HepG2 (cell line): ENCODE measurements at regions of chr20 and their contacts with region 1.

Region 1: DNA sequence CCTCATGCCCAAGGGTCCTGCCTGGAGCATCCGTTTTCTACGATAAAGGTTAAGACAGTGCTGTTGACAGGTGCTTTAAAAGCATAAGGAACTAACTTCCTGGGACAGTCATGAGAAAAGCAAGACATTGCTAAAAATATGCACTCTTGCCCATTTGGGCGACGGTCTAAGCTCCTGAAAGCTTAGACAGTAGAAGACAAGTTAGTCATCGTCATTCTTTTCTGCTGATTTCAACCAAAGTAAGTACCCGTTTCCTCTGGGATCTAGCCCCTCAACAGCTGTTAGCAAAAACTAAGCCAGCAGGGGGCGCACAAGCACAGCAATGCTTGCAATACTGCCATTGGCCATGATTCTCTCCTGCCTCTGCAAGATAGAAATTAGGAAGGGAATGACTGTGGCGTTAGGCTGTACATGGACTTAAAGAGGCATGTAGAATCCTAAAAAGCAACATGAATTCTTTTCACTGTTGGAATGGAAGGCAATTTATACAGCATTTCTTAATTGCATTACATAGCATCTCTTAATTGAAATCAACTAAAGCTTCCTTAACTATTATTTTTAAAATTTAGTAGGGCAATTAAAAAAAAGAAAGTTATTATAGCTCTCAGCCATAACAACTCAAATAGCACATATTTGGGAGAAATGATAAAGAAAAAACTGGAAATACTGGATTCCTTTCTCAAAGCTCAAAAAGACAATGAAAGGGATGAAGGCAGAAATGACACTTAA is 147.8 kb upstream of the RALGAPA2 start:
- DNase-seq: peak; percentile 87
- ATAC-seq: peak; percentile 93
- H3K4me3 ChIP-seq: no peak overlapping the region
- H3K27ac ChIP-seq: no peak overlapping the region
- H3K4me1 ChIP-seq: peaks cover 6% of the 10 kb centered on the region; the same call in 1 of the 2 replicates
- H3K27me3 ChIP-seq: no peaks in the 10 kb centered on the region
- CTCF ChIP-seq: peak; percentile 98
- EP300 ChIP-seq: no peak
- POLR2A ChIP-seq: no peak
- RAD21 ChIP-seq: peak; percentile 91

Region 2: DNA sequence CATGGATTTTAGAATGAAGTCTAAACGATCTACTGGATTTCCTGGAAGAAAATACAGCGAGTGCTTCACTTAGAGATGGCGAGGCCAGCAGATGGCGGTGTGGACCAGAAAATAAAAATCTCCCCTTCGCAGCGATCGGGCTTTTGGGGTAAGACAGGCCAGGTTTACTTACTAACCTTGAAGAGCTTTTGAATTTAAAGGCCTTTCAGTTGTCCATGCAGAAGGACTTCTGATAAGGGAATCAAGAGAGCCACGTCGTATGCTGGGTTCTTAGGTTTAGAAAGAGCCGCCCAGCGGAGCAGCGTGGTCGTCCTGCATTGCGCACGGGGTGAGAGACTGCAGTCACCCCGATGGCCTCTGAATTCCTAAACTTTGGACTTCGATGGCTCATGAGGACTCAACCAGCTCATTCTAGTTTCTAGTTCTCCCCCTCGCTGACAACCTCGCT is 22.6 kb before region 1 on chr20:
- CTCF ChIA-PET with region 1: interaction called, 9 read pairs
- POLR2A ChIA-PET with region 1: no interaction called
- in situ Hi-C with region 1: no loop called
- intact Hi-C with region 1: loop called (anchors 1 kb)
- DNase-seq: peak; percentile 60
- ATAC-seq: peak; percentile 89
- H3K4me3 ChIP-seq: peak overlapping the region in 2 of 3 experiments; percentile 18 to 57; a peak in 3 of 6 replicates
- H3K27ac ChIP-seq: no peak overlapping the region
- H3K4me1 ChIP-seq: peaks cover 7% of the 10 kb centered on the region
- H3K27me3 ChIP-seq: peaks cover 5 to 17% of the 10 kb centered on the region in 2 experiments; a peak in 4 of 5 replicates
- CTCF ChIP-seq: peak; percentile 91
- EP300 ChIP-seq: no peak
- POLR2A ChIP-seq: no peak
- RAD21 ChIP-seq: peak; percentile 83

Region 3: DNA sequence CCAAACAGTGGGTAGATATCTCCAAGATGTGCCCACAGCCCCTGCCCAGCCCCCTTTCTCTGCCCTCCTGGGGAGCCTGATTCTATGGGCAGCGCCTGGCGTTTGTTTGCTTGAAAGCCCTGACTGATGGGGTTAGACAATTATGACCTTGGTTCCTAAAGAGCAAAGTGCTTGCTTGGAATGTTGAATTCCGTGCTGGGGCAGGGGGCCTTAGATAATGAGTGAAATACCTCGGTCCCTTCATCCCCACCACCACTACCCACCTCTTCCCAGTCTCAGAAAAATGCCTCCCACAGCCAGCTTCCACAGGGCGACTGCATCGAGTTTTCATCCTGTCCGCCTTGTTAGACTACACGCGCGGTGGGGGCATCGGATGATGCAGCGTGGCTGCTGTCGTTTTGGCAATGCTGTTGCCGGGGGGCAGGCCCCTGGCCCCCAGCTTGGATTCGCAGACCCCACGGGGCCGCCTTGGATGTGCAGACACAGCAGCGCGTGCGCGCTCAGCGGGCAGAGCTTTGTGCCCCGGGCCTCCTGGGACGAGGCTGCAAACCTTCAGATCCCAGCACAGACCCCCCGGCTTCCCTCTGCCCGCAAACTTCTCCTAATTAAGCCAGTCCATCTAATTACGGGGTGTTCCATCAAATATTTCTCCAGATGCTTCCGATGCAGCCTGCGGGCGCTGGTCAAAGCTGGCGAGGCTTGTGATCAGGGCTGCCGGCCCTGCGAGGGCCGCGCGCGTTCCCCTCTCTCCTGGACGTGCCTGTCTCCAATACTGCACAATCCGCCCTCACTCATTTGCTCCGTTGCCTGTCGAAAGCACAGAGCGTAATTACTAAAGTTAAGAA is 159.8 kb after region 1 on chr20:
- CTCF ChIA-PET with region 1: no interaction called
- POLR2A ChIA-PET with region 1: no interaction called
- in situ Hi-C with region 1: loop called (anchors 10 kb)
- intact Hi-C with region 1: loop called (anchors 5 kb)
- DNase-seq: peak; percentile 82
- ATAC-seq: peak; percentile 63
- H3K4me3 ChIP-seq: peak overlapping the region; percentile 13 to 51 (median 31); a peak in 5 of 6 replicates
- H3K27ac ChIP-seq: peak overlapping the region; percentile 50
- H3K4me1 ChIP-seq: peaks cover 72% of the 10 kb centered on the region
- H3K27me3 ChIP-seq: no peaks in the 10 kb centered on the region
- CTCF ChIP-seq: no peak
- EP300 ChIP-seq: peak in 1 of 2 experiments; percentile 78; a peak in 2 of 4 replicates
- POLR2A ChIP-seq: no peak
- RAD21 ChIP-seq: no peak

Region 4: DNA sequence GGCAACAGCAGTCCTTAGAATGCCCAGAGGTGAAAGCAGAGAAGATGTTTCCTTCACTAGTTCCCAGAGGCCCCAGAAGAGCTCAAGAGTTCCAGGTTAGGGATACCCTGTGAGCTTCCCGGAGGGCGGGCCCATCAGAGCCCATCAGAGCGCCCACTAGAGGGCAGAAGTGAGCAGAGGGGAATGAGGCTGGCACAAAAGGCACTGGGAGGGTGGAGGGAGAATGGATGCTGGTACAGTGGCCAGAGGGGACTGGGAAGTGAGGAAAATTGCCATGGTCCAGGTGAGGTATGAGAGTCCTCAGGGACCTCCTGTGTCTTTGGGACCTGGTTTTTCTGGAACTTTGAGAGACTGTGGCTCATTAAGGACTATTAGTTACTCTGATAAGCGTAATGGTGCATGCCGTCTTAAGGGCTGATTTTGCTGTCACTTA is 188.6 kb after region 1 on chr20:
- CTCF ChIA-PET with region 1: no interaction called
- POLR2A ChIA-PET with region 1: no interaction called
- in situ Hi-C with region 1: no loop called
- intact Hi-C with region 1: loop called (anchors 2 kb)
- DNase-seq: peak; percentile 55
- ATAC-seq: peak; percentile 77
- H3K4me3 ChIP-seq: no peak overlapping the region
- H3K27ac ChIP-seq: no peak overlapping the region
- H3K4me1 ChIP-seq: peaks cover 58% of the 10 kb centered on the region
- H3K27me3 ChIP-seq: no peaks in the 10 kb centered on the region
- CTCF ChIP-seq: peak; percentile 79
- EP300 ChIP-seq: no peak
- POLR2A ChIP-seq: no peak
- RAD21 ChIP-seq: peak; percentile 75

Region 5: DNA sequence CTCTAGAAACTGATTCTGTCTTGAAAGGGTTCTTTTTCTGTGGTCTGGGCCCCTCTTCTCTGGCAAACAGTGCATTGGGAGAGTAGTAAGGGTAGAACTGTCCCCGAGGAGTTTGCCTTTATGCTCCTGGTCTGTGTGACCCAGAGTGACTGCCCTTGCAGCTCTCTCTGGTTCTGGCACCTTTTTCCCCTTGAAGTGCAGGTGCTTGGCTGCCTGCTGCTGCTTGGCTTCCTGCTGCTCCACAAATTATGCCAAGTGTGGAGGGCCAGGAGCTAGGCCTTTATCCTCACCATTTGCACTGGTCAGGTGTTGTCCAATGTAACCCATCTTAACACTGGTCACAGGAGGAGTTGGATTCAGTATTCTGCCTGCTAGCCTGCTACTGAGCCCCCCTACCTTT is 276.8 kb after region 1 on chr20:
- CTCF ChIA-PET with region 1: interaction called, 3 read pairs
- POLR2A ChIA-PET with region 1: no interaction called
- in situ Hi-C with region 1: no loop called
- intact Hi-C with region 1: loop called (anchors 1 kb)
- DNase-seq: no peak
- ATAC-seq: no peak
- H3K4me3 ChIP-seq: no peak overlapping the region
- H3K27ac ChIP-seq: peak overlapping the region; percentile 8
- H3K4me1 ChIP-seq: peaks cover 74% of the 10 kb centered on the region
- H3K27me3 ChIP-seq: no peaks in the 10 kb centered on the region
- CTCF ChIP-seq: no peak
- EP300 ChIP-seq: no peak
- POLR2A ChIP-seq: no peak
- RAD21 ChIP-seq: no peak

Region 6: GRCh38 chr20:21505161-21505809 is 645.0 kb after region 1 on chr20:
- CTCF ChIA-PET with region 1: interaction called, 63 read pairs
- POLR2A ChIA-PET with region 1: no interaction called
- in situ Hi-C with region 1: loop called (anchors 5 kb)
- intact Hi-C with region 1: loop called (anchors 1 kb)
- DNase-seq: peak; percentile 55
- ATAC-seq: peak; percentile 75
- H3K4me3 ChIP-seq: peak overlapping the region in 2 of 3 experiments; percentile 19 to 63; a peak in 3 of 6 replicates
- H3K27ac ChIP-seq: no peak overlapping the region
- H3K4me1 ChIP-seq: peaks cover 12% of the 10 kb centered on the region
- H3K27me3 ChIP-seq: peaks cover 10 to 65% of the 10 kb centered on the region in 2 experiments
- CTCF ChIP-seq: peak; percentile 99
- EP300 ChIP-seq: no peak
- POLR2A ChIP-seq: no peak
- RAD21 ChIP-seq: peak; percentile 100